ENCODE measurements at regions of chr19 and their contacts with region 1.

Region 1: GRCh38 chr19:44401139-44402115 is at the start of gene ZNF285:
- DNase-seq: peak; percentile 95 to 98 (median 97)
- ATAC-seq: peak; percentile 99 to 100 (median 100)
- H3K4me3 ChIP-seq: peak within 1 kb of the TSS; percentile 44 to 74 (median 60)
- H3K27ac ChIP-seq: peak within 1 kb of the TSS in 10 of 12 donors; percentile 6 to 66 (median 56)
- H3K4me1 ChIP-seq: peaks cover 0 to 4% (median 0%) of the 10 kb centered on the region in 12 donors
- H3K27me3 ChIP-seq: no peaks in the 10 kb centered on the region
- CTCF ChIP-seq: no peak
- POLR2A ChIP-seq: peak in 1 of 2 donors; percentile 23
- total RNA-seq, gene ZNF285: 2.0 to 6.7 (median 3.8) TPM

Region 2: GRCh38 chr19:44356383-44357111 is 44.9 kb before region 1 on chr19 and contains the start of gene ZNF112:
- intact Hi-C with region 1: loop called in 2 of 10 experiments (anchors 1 to 5 kb)
- DNase-seq: peak; percentile 86 to 92 (median 91)
- ATAC-seq: peak; percentile 100
- H3K4me3 ChIP-seq: peak within 1 kb of the TSS; percentile 41 to 97 (median 69)
- H3K27ac ChIP-seq: peak within 1 kb of the TSS in 9 of 12 donors; percentile 37 to 76 (median 63)
- H3K4me1 ChIP-seq: peaks cover 0 to 15% (median 7%) of the 10 kb centered on the region in 12 donors
- H3K27me3 ChIP-seq: no peaks in the 10 kb centered on the region
- CTCF ChIP-seq: no peak
- POLR2A ChIP-seq: peak in 1 of 2 donors; percentile 40
- total RNA-seq, gene ZNF112: 3.1 to 9.0 (median 5.5) TPM

Region 3: GRCh38 chr19:44447916-44448674 is 46.7 kb after region 1 on chr19 and contains the start of gene ZNF229:
- intact Hi-C with region 1: loop called in 1 of 10 experiments (anchors 5 kb)
- DNase-seq: peak; percentile 87 to 94 (median 89)
- ATAC-seq: peak; percentile 97 to 100 (median 98)
- H3K4me3 ChIP-seq: peak within 1 kb of the TSS; percentile 40 to 85 (median 70)
- H3K27ac ChIP-seq: peak within 1 kb of the TSS in 9 of 12 donors; percentile 5 to 69 (median 48)
- H3K4me1 ChIP-seq: peaks cover 0 to 14% (median 5%) of the 10 kb centered on the region in 12 donors
- H3K27me3 ChIP-seq: no peaks in the 10 kb centered on the region
- CTCF ChIP-seq: no peak
- POLR2A ChIP-seq: no peak
- total RNA-seq, gene ZNF229: 5.6 to 11.1 (median 6.7) TPM

Measured in heart left ventricle (tissue), 16 donors.